Motor neuron (in vitro differentiated cells): ENCODE measurements at regions of chr4 and their contacts with region 1.

Region 1: DNA sequence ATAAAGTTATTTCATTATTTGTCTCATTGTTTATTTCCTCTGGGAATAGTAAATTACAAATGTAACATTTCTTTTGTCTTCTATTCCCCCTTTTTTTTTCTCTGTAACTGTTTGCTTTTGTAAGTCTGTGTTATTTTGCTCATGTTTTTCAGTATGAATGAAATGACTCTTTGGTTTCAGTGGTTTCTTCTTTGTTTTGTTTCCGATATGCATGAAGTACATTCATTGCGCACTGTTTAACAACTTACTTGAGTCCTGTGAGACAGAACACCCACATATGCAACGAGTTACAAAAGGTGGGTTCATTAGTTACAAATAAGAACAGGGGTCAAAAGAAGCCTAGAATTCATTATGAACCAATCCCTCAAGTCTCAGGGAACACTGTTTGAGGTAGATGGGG is 175.0 kb upstream of the UGT8 start:
- ATAC-seq: no peak
- H3K4me3 ChIP-seq: no peak overlapping the region
- H3K27ac ChIP-seq: no peak overlapping the region
- H3K4me1 ChIP-seq: no peaks in the 10 kb centered on the region

Region 2: GRCh38 chr4:114364857-114365256 is 58.7 kb before region 1 on chr4:
- in situ Hi-C with region 1: no loop called
- ATAC-seq: no peak
- H3K4me3 ChIP-seq: no peak overlapping the region
- H3K27ac ChIP-seq: no peak overlapping the region
- H3K4me1 ChIP-seq: peaks cover 0 to 7% of the 10 kb centered on the region in 2 donors

Region 3: DNA sequence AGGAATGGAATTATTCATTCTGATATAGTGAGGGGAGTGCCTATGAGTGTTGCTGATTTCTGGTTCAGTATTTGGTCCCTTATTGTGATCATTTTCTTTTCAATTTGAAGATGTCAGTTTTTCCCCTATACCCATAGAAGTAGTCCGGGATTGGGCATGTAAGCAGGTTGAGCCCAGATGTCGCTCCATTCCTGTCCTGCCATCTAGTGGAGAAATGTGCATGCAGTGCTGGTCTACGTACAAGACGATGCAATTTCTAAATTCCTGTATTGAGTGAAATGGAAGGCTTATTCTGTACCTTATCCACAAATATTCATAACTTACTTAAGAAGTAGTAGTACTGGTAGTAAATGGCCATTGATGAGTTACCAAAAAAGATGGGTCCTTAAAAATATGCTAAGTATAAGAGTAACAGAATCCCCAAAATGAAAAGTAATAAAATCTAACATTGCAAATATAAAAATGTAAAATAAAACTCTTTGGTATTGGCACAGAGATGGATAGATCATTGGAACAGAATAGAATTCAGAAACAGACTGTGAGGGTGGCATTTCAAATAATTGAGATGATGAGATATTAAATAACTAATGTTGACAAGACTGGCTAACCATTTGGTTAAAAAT is 235.9 kb after region 1 on chr4:
- in situ Hi-C with region 1: loop called in 2 of 9 experiments (anchors 25 kb)
- ATAC-seq: peak; percentile 75 to 99 (median 93)
- H3K4me3 ChIP-seq: no peak overlapping the region
- H3K27ac ChIP-seq: no peak overlapping the region
- H3K4me1 ChIP-seq: no peaks in the 10 kb centered on the region